Activated T-helper 2 cell treated with anti-CD3 and anti-CD28 coated beads, Interferon-gamma antibody, Interleukin-2, Interleukin-4, amounts not matched to agents 10 μg/mL and 5 μg/mL and 100 μg/mL, durations not matched to agents 14 hours and 24 hours and 36 hours (primary cell): ENCODE measurements at regions of chr7 and their contacts with region 1.

Region 1: DNA sequence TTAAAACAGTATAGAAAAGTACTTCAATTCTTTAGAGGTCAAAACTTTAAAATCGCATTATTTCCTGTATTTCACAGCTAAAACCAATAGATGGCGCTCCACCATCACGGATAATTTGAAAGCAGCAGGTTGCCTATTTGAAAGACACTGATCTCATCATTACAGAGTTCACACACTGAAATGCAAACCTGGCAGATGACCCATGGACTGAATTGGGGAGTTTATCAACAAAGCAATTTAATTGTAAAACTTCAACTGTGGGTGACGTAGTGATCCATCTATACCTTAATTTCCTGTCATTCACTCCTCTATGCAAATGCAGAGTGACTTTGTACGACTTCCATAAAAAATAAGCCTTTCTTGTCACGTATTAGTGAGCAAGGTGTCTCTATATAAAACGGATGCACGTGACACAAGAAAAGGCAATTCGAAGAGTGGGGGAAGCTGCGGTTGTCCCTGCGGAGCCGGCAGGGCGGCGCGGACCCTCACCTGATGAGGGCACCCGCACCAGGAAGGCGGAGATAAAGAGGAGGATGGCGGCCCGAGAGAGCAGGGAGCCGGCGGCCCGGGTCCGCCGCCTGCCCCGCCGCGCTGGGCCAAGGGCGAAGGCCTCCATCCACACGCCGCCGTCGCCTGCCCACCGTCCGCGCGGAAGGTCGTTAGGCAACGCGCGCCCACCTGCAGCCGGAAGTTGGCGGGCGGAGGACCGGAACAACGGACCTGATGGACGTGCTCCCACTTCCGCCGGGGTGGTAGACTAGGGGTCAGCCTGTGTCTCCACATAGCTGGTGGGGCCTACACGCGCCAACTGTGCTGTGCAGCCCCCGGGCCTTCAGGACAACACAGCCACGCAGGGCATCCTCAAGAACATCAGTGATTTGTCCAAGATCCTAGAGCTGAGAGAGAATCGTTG is at the start of gene ZPBP:
- DNase-seq: peak; percentile 40
- H3K4me3 Mint-ChIP-seq: peak within 1 kb of the TSS; percentile 81
- H3K27ac Mint-ChIP-seq: peak within 1 kb of the TSS; percentile 39
- H3K4me1 Mint-ChIP-seq: peaks cover 9% of the 10 kb centered on the region
- H3K27me3 Mint-ChIP-seq: peaks cover 30% of the 10 kb centered on the region
- total RNA-seq, gene ZPBP: not detected in 2 replicates

Region 2: DNA sequence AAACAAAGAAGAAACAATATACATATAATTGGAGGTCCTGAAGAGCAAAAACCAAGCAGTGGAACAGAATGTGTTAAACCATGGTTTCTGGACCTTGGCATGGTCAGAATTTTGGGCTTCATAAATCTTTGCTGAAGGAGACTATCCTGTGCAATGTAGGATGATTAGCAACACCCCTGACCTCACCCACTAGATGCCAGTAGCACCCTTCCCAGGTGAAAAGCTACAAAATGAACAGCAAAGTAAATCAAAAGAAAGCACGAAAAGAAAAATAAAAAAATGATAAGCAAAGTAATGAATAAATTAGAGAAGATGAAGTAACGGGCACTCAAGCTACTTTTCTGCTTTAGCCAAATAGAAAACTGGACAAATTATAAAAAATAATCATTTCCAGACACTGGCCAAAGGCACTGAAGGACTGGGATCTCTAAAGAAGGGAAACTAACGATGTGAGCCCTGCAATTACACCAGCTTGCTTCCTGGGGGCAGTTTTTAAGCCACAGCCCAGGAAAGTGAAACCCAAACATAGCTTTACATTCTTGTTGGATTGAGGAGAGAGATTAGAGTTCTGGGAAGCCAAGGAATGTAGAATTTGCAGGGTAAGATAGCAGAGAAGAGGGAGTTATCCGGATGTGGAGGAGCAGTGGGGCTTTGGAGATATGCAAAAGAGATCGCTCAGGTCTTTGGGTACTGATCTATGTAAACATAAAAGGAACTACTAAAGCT is 19.6 kb after region 1 on chr7:
- intact Hi-C with region 1: no loop called
- DNase-seq: no peak
- H3K4me3 Mint-ChIP-seq: no peak overlapping the region
- H3K27ac Mint-ChIP-seq: no peak overlapping the region
- H3K4me1 Mint-ChIP-seq: no peaks in the 10 kb centered on the region
- H3K27me3 Mint-ChIP-seq: peaks cover 38% of the 10 kb centered on the region

Region 3: GRCh38 chr7:50418086-50418515 is 325.3 kb after region 1 on chr7:
- intact Hi-C with region 1: loop called (anchors 1 kb)
- DNase-seq: peak; percentile 66
- H3K4me3 Mint-ChIP-seq: no peak overlapping the region
- H3K27ac Mint-ChIP-seq: no peak overlapping the region
- H3K4me1 Mint-ChIP-seq: peaks cover 28% of the 10 kb centered on the region
- H3K27me3 Mint-ChIP-seq: no peaks in the 10 kb centered on the region

Region 4: DNA sequence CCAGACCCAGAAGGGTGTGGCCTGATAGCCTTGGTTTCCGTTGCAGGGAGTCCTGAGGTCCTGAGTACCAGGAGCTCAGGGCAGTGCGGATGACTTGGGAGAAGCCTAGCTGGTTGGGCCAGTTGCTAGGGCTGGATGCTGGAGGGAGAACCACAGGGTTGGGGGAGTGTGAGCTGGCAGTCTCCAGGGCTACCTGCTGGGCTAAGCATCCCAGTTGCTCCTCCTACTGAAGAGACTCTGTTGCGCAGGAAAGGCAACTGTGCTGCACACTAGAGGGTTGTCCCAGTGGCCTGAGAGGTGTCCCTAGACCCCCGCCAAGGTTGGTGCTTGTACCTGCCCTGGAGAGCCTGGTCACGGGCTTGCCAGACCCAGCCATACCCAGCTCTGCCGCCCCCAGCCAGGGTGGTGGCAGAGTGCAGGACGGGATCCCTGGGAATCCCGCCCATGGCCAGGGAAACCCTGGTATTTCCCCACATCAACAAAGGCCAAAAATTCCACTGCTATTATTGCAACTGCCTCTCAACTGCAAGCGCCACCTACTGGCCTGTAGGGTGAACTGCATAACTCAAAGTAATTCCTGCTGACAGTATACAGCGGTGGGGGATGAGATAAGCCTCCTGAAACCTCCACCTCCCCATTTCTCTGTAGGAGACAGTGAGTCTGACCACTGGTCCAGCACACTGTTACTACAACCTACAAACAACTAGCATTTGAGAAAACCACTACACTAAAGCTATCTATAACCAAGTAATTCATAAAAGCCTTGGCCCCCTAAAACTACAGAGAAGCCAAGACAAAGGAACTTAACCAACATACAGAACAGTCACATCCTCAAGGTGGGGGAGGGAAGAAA is 540.0 kb after region 1 on chr7:
- intact Hi-C with region 1: loop called (anchors 5 kb)
- DNase-seq: peak; percentile 37
- H3K4me3 Mint-ChIP-seq: no peak overlapping the region
- H3K27ac Mint-ChIP-seq: no peak overlapping the region
- H3K4me1 Mint-ChIP-seq: peaks cover 7% of the 10 kb centered on the region
- H3K27me3 Mint-ChIP-seq: peaks cover 17% of the 10 kb centered on the region

Region 5: GRCh38 chr7:51067757-51068156 is 974.9 kb after region 1 on chr7:
- intact Hi-C with region 1: loop called (anchors 5 kb)
- DNase-seq: no peak
- H3K4me3 Mint-ChIP-seq: no peak overlapping the region
- H3K27ac Mint-ChIP-seq: no peak overlapping the region
- H3K4me1 Mint-ChIP-seq: no peaks in the 10 kb centered on the region
- H3K27me3 Mint-ChIP-seq: peaks cover 2% of the 10 kb centered on the region